ENCODE measurements at regions of chr4 and their contacts with region 1.

Region 1: DNA sequence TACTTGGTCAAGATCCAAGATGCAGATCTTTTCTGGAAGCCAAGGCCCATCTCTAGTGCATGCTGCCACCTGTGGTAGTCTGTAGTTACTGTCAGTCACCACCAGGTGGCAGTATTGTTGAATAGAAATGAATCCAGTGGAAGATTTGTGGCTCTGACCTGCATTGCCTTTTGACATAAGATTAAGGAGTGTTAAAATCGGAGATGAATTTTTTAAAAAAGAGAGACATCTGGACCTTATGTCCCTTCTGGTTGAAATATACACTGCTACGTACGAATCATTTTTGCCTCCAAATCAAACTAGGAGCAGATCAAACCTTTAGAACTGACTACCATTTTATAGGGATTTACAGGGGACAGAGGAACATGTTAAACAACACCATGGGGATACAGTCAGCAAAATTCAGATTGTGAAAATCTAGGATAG is 46.9 kb upstream of the RHOH start:
- DNase-seq: no peak
- ATAC-seq: peak; percentile 49

Region 2: DNA sequence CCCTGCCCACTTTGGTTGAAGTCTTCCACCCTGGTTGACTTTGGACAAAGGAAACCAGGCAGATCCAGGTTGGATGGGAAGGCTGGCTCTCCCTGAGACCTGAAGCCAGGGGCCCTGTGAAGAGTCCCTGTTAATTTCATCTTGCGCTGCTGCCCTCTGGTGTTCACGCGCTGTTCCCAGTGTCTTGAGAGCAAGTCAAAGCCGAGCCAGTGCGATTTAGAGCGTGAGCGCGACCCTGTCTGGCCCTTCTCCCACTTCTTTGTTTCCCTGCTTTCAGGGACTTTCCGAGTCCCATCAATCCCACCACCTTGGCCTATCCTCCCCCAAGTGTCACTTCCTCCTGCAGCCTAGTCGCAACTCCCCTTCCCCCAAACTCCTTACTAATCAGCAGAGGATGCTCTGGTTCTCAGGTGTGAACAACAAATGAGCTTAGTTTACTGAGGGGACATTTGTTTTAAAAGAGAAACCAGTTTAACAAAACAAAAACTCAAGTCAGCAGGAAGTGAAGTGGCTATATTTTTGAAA is 159.3 kb after region 1 on chr4:
- intact Hi-C with region 1: loop called (anchors 2 kb)
- DNase-seq: peak; percentile 93
- ATAC-seq: peak; percentile 91

Measured in left ventricle myocardium superior (tissue), 1 donor.